ENCODE measurements at regions of chr5 and their contacts with region 1.

Region 1: DNA sequence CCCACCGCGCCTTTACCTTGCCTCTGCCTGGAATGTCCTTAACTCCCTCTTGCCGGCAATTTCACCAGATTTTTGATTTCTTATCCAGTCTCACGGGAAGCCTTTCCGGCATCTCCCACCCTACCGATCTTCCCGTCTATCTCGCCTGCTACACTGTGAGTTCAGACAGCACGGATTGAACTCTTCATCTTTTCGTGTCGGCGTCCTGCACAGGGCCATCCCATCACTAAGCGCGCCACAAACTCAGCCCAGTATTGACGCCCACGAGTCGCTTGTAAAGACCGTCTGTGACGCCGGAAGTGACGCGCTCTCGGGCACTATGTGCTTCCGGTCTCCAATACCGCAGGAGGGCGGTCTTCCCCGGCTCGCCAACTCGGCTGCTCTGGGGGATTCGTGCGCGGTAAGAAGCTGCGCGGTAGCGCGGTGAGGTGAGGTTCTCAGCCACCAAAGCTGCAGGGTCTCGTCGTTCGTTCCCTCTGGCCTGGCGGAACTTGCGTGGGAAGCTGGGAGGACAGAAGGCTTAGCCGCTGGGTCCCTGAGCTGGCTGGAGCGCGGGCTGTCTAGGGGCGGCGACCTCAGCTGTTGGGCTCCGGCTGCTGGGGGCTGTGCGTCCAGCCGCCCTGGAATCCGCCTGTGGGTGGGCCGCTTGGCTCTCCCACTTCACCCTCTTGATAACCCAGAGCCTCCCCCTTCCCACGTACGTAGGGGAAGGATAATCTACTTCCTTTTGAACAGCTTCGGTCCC is at the start of gene ZCCHC9:
- DNase-seq: peak; percentile 94
- H3K4me3 Mint-ChIP-seq: peak within 1 kb of the TSS; percentile 86
- H3K27ac Mint-ChIP-seq: peak within 1 kb of the TSS; percentile 88
- H3K4me1 Mint-ChIP-seq: peaks cover 59% of the 10 kb centered on the region
- H3K27me3 Mint-ChIP-seq: no peaks in the 10 kb centered on the region
- total RNA-seq, gene ZCCHC9: 41.3 to 43.2 TPM

Region 2: DNA sequence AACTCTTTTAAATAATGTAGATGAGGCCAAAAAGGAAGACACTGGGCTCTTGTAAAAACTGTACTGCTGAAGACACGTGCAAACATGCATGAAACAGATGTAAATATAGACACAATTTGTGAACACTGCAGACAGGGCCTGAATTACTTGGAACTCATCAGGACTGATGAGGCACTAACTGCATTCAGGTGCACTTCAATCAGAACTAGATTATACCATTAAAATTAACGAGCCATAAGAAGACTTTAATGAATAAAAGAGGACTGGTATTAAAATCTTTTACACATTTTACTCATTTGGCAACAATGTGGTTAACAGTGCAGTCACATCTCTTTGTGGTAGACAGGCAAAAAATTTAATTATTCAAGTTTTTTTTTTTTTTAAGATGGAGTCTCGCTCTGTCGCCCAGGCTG is 13.4 kb before region 1 on chr5:
- CTCF ChIA-PET with region 1: interaction called, 18 read pairs
- POLR2A ChIA-PET with region 1: interaction called, 10 read pairs
- DNase-seq: no peak
- H3K4me3 Mint-ChIP-seq: no peak overlapping the region
- H3K27ac Mint-ChIP-seq: no peak overlapping the region
- H3K4me1 Mint-ChIP-seq: peaks cover 54% of the 10 kb centered on the region
- H3K27me3 Mint-ChIP-seq: no peaks in the 10 kb centered on the region

Region 3: GRCh38 chr5:81315336-81315735 is 13.9 kb after region 1 on chr5:
- CTCF ChIA-PET with region 1: interaction called, 3 read pairs
- POLR2A ChIA-PET with region 1: interaction called, 23 read pairs
- DNase-seq: no peak
- H3K4me3 Mint-ChIP-seq: no peak overlapping the region
- H3K27ac Mint-ChIP-seq: no peak overlapping the region
- H3K4me1 Mint-ChIP-seq: no peaks in the 10 kb centered on the region
- H3K27me3 Mint-ChIP-seq: no peaks in the 10 kb centered on the region

Region 4: GRCh38 chr5:81334304-81335061 is 33.0 kb after region 1 on chr5:
- CTCF ChIA-PET with region 1: no interaction called
- POLR2A ChIA-PET with region 1: no interaction called
- DNase-seq: no peak
- H3K4me3 Mint-ChIP-seq: no peak overlapping the region
- H3K27ac Mint-ChIP-seq: no peak overlapping the region
- H3K4me1 Mint-ChIP-seq: no peaks in the 10 kb centered on the region
- H3K27me3 Mint-ChIP-seq: peaks cover under 1% of the 10 kb centered on the region